PC-9 (cell line): ENCODE measurements at regions of chr1 and their contacts with region 1.

Region 1: DNA sequence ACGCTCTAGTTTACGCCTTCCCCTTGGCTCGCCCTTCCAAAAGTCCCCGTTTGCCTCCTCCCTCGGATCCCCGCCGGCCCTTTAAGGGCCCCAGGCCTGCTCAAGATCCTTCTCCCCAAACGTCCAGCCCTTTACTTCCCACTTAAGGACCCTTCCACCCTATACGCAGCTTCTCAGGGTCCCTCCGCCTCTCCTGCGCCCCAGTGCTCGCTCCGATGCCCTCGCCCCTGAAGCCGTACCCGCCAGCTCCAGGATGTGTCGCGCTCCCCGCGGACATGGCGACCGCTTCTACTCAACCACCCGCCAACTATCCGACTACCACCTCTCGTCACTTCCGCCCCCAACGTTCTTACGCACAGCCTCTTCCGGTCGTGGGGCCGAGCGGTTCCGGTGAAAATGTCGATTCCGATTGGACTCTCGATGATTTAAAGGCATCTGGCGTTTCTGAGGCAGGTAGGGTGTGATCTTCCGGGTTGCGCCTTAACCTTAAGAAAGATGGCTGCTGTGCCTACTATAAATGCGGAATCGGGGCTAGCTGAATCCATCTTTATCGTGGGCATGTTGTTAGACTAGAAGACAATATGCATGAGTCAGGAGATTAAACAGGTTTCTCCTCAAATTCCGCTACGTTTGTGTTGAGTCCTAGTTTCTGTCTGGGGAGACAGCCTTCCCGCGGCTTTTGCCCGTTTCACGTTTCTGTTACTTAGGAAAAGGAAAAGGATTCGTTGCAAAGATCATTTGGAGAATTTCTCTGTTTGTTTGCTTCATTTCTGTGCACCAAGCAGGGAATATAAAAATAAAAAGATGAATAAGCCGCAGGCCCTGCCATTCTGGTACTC is at the start of gene KHDC4:
- DNase-seq: peak; percentile 90 to 96
- H3K4me3 ChIP-seq: peak within 1 kb of the TSS; percentile 84
- H3K27ac ChIP-seq: peak within 1 kb of the TSS; percentile 92
- H3K4me1 ChIP-seq: peaks cover 46% of the 10 kb centered on the region
- H3K27me3 ChIP-seq: no peaks in the 10 kb centered on the region
- CTCF ChIP-seq: no peak
- total RNA-seq, gene KHDC4: 63.4 and 68.8 TPM in 2 replicates

Region 2: GRCh38 chr1:155135415-155136028 is 798.8 kb before region 1 on chr1 and contains the start of gene SLC50A1:
- CTCF ChIA-PET with region 1: no interaction called
- POLR2A ChIA-PET with region 1: no interaction called
- intact Hi-C with region 1: no loop called
- DNase-seq: peak; percentile 80 to 94
- H3K4me3 ChIP-seq: peak within 1 kb of the TSS; percentile 78
- H3K27ac ChIP-seq: peak within 1 kb of the TSS; percentile 99
- H3K4me1 ChIP-seq: peaks cover 54% of the 10 kb centered on the region
- H3K27me3 ChIP-seq: no peaks in the 10 kb centered on the region
- CTCF ChIP-seq: 0 out of 2 replicates have a peak, but pooled peaks have one; percentile 15
- total RNA-seq, gene SLC50A1: 54.9 and 67.6 TPM in 2 replicates

Region 3: GRCh38 chr1:155961937-155962336 is 27.6 kb after region 1 on chr1:
- CTCF ChIA-PET with region 1: no interaction called
- POLR2A ChIA-PET with region 1: interaction called, 18 read pairs
- intact Hi-C with region 1: loop called (anchors 1 kb)
- DNase-seq: peak; percentile 98 to 99
- H3K4me3 ChIP-seq: no peak overlapping the region
- H3K27ac ChIP-seq: peak overlapping the region; percentile 99
- H3K4me1 ChIP-seq: peaks cover 38% of the 10 kb centered on the region
- H3K27me3 ChIP-seq: no peaks in the 10 kb centered on the region
- CTCF ChIP-seq: no peak; the same call in 1 of the 2 replicates

Region 4: DNA sequence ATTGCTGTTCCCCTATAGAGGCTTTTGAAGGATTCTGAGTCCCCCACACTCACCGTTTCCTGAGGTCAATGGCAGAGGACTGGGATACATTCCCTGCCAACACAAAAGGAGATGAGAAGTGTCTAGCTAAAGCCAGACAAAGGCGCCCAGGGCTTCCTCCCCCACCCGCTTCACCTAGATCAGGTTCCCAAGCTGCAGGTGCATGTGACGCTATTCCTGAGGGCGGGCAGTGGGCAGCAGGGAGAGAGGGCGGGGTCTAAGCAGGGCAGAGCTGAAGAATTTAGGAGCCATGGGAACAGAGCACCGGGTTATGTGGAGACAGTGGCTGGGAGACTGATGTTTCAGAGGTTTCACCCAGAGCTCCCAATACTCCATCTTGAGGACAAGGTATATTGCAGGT is 50.0 kb after region 1 on chr1:
- CTCF ChIA-PET with region 1: interaction called, 7 read pairs
- POLR2A ChIA-PET with region 1: interaction called, 29 read pairs
- intact Hi-C with region 1: loop called (anchors 1 kb)
- DNase-seq: no peak
- H3K4me3 ChIP-seq: peak overlapping the region; percentile 93; the same call in 1 of the 2 replicates
- H3K27ac ChIP-seq: peak overlapping the region; percentile 96
- H3K4me1 ChIP-seq: peaks cover 44% of the 10 kb centered on the region
- H3K27me3 ChIP-seq: no peaks in the 10 kb centered on the region
- CTCF ChIP-seq: no peak

Region 5: DNA sequence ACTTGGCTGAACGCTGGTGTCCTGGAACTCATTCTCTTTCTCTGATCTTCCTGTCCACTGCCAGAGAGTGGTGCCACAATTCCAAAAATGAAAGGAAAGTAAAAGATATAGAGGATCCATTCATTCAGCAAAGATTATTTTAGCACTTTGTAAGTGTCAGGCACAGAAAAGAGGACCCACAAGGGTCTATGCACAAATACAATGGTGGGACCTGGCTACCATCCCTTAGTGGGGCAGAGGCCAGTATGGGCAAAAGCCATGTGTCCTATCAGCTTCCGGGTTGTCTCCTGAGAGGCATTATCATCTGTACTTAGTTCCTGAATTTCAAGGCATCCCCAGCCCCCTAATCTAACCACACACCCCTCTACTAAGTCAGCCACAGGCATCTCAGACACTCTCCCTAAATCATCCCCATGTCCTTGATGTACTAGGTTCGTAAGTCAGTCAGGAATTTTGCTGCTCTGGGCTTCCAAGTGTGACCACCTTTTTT is 67.4 kb after region 1 on chr1:
- CTCF ChIA-PET with region 1: interaction called, 6 read pairs
- POLR2A ChIA-PET with region 1: interaction called, 3 read pairs
- intact Hi-C with region 1: loop called (anchors 5 kb)
- DNase-seq: peak in 1 of 2 experiments; percentile 12
- H3K4me3 ChIP-seq: peak overlapping the region; percentile 25; the same call in 1 of the 2 replicates
- H3K27ac ChIP-seq: peak overlapping the region; percentile 81
- H3K4me1 ChIP-seq: peaks cover 57% of the 10 kb centered on the region
- H3K27me3 ChIP-seq: no peaks in the 10 kb centered on the region
- CTCF ChIP-seq: no peak

Region 6: DNA sequence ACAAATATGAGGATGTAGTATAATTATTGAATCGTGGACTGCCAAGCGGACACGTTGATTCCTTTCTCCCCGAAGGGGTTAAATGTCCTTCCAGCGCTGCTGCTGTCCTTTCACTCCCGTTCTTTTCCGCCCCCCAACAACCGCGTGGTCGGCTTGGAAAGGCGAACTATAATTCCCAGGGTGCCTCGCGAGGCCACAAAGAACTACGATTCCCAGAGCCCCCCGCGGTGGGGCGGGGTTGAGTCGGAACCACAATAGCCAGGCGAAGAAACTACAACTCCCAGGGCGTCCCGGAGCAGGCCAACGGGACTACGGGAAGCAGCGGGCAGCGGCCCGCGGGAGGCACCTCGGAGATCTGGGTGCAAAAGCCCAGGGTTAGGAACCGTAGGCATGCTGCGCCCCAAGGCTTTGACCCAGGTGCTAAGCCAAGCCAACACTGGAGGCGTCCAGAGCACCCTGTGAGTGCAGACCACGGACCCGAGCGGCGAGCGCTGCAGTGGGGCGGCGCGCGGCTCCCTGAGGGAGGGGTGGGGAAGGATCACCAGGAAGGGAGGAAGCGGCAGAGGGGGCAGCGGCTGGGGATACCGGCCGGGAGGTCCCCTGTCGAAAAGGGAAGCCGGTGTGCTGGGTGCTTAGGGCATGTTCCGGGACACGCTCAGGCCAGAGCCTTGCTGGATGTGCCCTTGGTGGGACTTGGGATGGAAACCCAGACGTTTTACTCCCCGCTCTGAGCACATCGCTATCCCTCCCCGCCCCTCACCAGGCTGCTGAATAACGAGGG is 120.4 kb after region 1 on chr1 and contains the start of gene LAMTOR2:
- CTCF ChIA-PET with region 1: interaction called, 16 read pairs
- POLR2A ChIA-PET with region 1: no interaction called
- intact Hi-C with region 1: no loop called
- DNase-seq: peak; percentile 93 to 97
- H3K4me3 ChIP-seq: peak within 1 kb of the TSS; percentile 84
- H3K27ac ChIP-seq: peak within 1 kb of the TSS; percentile 85
- H3K4me1 ChIP-seq: peaks cover 11% of the 10 kb centered on the region; the same call in 1 of the 2 replicates
- H3K27me3 ChIP-seq: no peaks in the 10 kb centered on the region
- CTCF ChIP-seq: 0 out of 2 replicates have a peak, but pooled peaks have one; percentile 7
- total RNA-seq, gene LAMTOR2: 76.8 and 117 TPM in 2 replicates

Region 7: GRCh38 chr1:156129706-156130581 is 195.6 kb after region 1 on chr1:
- CTCF ChIA-PET with region 1: no interaction called
- POLR2A ChIA-PET with region 1: interaction called, 3 read pairs
- intact Hi-C with region 1: loop called (anchors 1 kb)
- DNase-seq: peak; percentile 94 to 98
- H3K4me3 ChIP-seq: peak overlapping the region; percentile 20; the same call in 1 of the 2 replicates
- H3K27ac ChIP-seq: peak overlapping the region; percentile 98
- H3K4me1 ChIP-seq: peaks cover 56% of the 10 kb centered on the region
- H3K27me3 ChIP-seq: no peaks in the 10 kb centered on the region
- CTCF ChIP-seq: peak; percentile 99